HAP-1 (cell line): ENCODE measurements at regions of chr17 and their contacts with region 1.

Region 1: DNA sequence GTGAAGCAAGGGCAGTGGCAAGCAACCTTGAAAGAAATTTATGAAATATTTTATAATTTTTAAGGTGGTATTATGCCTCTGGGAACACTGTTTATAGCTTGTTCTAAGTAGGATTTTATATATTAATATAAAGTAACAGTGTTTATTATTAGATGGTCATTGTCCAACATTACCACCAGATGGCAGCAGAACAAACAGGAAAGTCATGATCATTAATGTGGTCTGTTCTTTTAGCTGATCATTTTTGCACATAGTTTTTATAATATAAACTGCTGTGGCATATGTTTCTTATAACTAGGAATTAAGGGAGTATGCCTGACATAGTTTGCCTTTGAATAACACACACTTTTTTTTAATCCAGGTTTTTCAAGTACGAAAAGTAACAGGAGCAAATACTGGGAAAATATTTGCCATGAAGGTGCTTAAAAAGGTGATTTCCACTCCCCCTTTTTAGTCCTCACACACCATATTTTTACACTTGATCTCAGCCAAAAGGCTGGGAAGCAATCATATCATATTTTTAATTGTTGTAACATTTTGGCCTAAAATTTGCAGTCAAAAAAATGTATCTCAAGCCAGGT is 21.4 kb downstream of the RPS6KB1 start:
- DNase-seq: peak; percentile 25 to 56
- H3K4me3 ChIP-seq: no peak overlapping the region
- H3K4me1 ChIP-seq: no peaks in the 10 kb centered on the region
- H3K27me3 ChIP-seq: no peaks in the 10 kb centered on the region

Region 2: GRCh38 chr17:59311130-59311920 is 603.0 kb before region 1 on chr17:
- in situ Hi-C with region 1: loop called (anchors 25 kb)
- DNase-seq: peak; percentile 62 to 86
- H3K4me3 ChIP-seq: no peak overlapping the region
- H3K4me1 ChIP-seq: no peaks in the 10 kb centered on the region
- H3K27me3 ChIP-seq: no peaks in the 10 kb centered on the region

Region 3: DNA sequence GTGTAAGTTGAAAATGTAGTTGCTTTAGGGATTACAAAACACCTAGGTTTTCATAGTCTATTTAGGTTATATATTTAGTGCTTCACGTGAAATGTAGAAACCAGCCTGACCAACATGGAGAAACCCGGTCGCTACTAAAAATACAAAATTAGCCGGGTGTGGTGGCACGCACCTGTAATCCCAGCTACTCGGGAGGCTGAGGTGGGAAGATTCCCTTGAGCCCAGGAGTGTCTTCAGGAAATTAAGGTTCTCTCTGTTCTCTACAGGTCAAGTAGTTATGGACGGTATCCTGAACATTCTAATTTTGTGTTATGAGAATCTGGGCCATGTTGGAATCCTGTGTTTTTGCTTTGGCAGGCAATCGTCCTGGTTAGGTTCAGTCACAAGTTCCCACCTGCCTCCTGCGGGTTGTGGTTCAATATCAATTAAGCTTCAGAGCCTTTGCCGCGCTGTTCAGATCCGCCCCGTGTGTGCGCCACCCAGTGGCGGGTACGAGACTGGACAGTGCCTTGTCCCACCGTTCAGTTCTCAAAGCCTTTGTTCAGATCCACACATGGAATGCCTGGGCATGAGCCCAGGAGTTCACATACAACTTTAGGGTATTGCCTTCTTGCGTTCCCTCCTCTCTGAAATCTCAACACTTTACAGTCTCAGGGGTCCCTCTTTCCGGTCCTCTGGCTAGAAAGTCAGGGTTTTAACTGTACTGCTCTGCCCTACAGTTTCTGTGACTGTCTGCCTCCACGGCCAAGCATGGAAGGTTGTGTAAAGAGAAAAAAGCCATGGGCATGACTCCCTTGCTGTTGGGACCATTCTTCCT is 122.6 kb after region 1 on chr17:
- in situ Hi-C with region 1: loop called (anchors 10 kb)
- DNase-seq: peak; percentile 85
- H3K4me3 ChIP-seq: no peak overlapping the region
- H3K4me1 ChIP-seq: no peaks in the 10 kb centered on the region
- H3K27me3 ChIP-seq: peaks cover 3% of the 10 kb centered on the region; the same call in 1 of the 2 replicates

Region 4: GRCh38 chr17:60435244-60436167 is 521.1 kb after region 1 on chr17:
- in situ Hi-C with region 1: loop called (anchors 25 kb)
- DNase-seq: peak; percentile 77 to 81
- H3K4me3 ChIP-seq: no peak overlapping the region
- H3K4me1 ChIP-seq: peaks cover 9% of the 10 kb centered on the region
- H3K27me3 ChIP-seq: no peaks in the 10 kb centered on the region